Activated B cell treated with CpG ODN at 0.5 μM for 24 hours (primary cell): ENCODE measurements at regions of chr7 and their contacts with region 1.

Region 1: DNA sequence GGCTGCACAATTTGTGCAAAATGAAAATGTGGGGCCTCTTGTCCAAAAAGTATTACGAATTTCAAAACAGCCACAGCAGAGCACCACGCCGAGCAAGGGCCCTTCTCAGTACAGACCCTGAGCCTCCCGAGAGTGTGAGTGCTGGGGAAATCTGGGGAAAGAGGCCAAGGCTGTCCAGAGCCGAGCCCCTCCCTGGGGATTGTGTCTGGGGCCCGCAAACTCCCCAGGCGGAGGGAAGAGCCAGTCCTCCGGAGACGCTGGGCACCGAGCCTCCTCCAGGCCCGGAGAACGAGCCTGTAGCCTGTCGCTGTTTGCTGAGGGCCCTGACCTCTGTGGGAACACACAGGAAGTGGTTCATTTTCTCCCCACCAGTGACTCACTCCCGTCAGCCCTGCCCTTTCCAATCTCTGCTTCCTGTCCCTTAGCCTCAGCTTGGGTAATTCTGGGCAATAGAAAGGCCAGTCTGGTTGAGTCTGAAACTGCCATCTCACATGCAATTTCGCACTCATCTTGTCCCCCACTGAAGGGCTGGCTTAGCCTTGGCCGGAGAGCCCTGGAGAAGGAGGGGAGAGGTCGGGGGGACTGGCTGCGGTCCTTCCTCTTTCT is 19.5 kb upstream of the GNA12 start:
- DNase-seq: peak; percentile 41
- ATAC-seq: peak; percentile 91
- H3K4me3 Mint-ChIP-seq: peak overlapping the region; percentile 66
- H3K27ac Mint-ChIP-seq: peak overlapping the region; percentile 87
- H3K4me1 Mint-ChIP-seq: peaks cover 24% of the 10 kb centered on the region
- H3K27me3 Mint-ChIP-seq: no peaks in the 10 kb centered on the region
- CTCF ChIP-seq: no peak

Region 2: GRCh38 chr7:2720582-2721491 is 142.7 kb before region 1 on chr7:
- CTCF ChIA-PET with region 1: interaction called, 4 read pairs
- POLR2A ChIA-PET with region 1: interaction called, 3 read pairs
- intact Hi-C with region 1: loop called (anchors 2 kb)
- DNase-seq: peak; percentile 57
- ATAC-seq: peak; percentile 82
- H3K4me3 Mint-ChIP-seq: peak overlapping the region; percentile 26
- H3K27ac Mint-ChIP-seq: peak overlapping the region; percentile 84
- H3K4me1 Mint-ChIP-seq: peaks cover 56% of the 10 kb centered on the region
- H3K27me3 Mint-ChIP-seq: no peaks in the 10 kb centered on the region
- CTCF ChIP-seq: no peak

Region 3: DNA sequence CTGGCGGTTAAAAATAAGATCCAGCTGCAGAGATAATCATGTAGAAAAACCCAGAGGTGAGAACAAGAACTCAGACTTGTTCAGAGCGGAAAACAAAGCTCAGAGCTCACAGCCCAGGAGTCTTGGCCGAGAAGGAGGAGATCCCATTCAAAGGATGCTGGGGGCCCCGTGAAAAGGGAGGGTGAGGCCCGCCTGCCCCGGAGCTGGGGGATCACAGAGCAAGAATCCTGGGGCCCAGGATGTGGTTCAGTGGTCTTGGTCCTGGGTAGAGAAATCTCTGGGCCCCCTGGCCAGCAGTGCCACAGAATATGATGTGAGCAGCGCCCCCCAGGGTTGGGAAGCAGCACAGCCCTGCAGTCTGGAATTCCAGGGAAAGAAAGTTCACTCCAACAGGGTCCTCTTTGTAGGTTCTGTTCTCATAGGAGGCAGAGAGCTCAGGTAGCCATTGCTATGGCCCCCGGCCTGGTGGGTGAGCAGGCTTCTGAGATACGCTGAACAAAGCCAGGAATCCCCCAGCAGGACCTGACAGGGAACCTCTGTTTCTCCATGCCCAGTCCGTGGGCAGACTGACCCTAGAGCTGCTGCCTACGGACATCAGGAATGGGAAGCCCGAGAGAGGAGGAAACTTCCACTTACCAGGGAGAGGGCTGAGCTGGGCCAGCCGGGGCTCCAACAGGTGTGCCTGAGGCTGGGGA is 58.2 kb after region 1 on chr7:
- CTCF ChIA-PET with region 1: no interaction called
- POLR2A ChIA-PET with region 1: no interaction called
- intact Hi-C with region 1: no loop called
- DNase-seq: no peak
- ATAC-seq: no peak
- H3K4me3 Mint-ChIP-seq: no peak overlapping the region
- H3K27ac Mint-ChIP-seq: no peak overlapping the region
- H3K4me1 Mint-ChIP-seq: no peaks in the 10 kb centered on the region
- H3K27me3 Mint-ChIP-seq: no peaks in the 10 kb centered on the region
- CTCF ChIP-seq: no peak

Region 4: DNA sequence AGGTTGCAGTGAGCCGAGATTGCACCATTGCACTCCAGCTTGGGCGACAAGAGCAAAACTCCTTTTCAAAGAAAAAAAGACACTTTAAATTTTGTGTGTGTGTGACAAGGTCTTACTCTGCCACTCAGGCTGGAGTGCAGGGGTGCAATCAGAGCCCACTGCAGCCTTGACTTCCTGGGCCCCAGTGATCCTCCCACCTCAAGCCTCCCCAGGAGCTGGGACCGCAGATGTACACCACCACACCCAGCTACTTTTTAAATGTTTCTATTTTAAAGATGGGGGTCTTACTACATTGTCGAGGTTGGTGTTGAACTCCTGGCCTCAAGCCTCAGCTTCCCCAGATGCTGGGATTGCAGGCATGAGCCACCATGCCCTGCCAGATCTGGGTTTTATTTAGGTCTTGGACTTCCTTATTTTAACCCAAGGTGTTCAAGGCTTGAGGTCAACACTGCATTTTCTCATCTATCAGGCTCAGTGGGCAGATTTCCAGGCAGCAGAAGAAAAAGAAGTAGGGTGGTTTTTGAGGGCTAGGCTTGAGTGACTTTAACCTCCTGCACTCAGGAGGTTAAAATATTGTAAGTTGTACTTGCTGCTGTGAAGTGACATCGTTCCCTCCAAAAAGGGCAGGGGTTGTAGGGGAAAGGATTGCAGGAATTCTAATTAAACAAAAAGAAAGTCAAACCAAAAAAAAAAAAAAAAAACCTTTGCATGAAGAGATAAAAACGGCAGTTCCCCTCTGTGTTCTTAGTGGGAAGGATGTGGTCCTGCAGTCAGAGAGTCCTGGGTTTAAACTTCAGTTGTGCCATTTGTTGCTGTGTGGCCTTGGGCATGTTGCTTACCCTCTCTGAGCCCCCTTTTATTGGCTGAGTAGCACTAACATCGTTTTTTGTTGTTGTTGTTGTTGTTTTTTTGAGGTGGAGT is 108.6 kb after region 1 on chr7:
- CTCF ChIA-PET with region 1: no interaction called
- POLR2A ChIA-PET with region 1: no interaction called
- intact Hi-C with region 1: no loop called
- DNase-seq: no peak
- ATAC-seq: peak; percentile 67
- H3K4me3 Mint-ChIP-seq: peak overlapping the region; percentile 64
- H3K27ac Mint-ChIP-seq: peak overlapping the region; percentile 79
- H3K4me1 Mint-ChIP-seq: peaks cover 43% of the 10 kb centered on the region
- H3K27me3 Mint-ChIP-seq: no peaks in the 10 kb centered on the region
- CTCF ChIP-seq: no peak

Region 5: GRCh38 chr7:3021825-3022224 is 158.3 kb after region 1 on chr7:
- CTCF ChIA-PET with region 1: no interaction called
- POLR2A ChIA-PET with region 1: no interaction called
- intact Hi-C with region 1: no loop called
- DNase-seq: no peak
- ATAC-seq: no peak
- H3K4me3 Mint-ChIP-seq: no peak overlapping the region
- H3K27ac Mint-ChIP-seq: peak overlapping the region; percentile 25
- H3K4me1 Mint-ChIP-seq: peaks cover 28% of the 10 kb centered on the region
- H3K27me3 Mint-ChIP-seq: no peaks in the 10 kb centered on the region
- CTCF ChIP-seq: no peak

Region 6: GRCh38 chr7:3065724-3066143 is 202.2 kb after region 1 on chr7:
- CTCF ChIA-PET with region 1: interaction called, 11 read pairs
- POLR2A ChIA-PET with region 1: no interaction called
- intact Hi-C with region 1: no loop called
- DNase-seq: peak; percentile 58
- ATAC-seq: peak; percentile 40
- H3K4me3 Mint-ChIP-seq: peak overlapping the region; percentile 68
- H3K27ac Mint-ChIP-seq: peak overlapping the region; percentile 61
- H3K4me1 Mint-ChIP-seq: peaks cover 67% of the 10 kb centered on the region
- H3K27me3 Mint-ChIP-seq: no peaks in the 10 kb centered on the region
- CTCF ChIP-seq: no peak

Region 7: GRCh38 chr7:3200504-3200903 is 336.9 kb after region 1 on chr7:
- CTCF ChIA-PET with region 1: no interaction called
- POLR2A ChIA-PET with region 1: no interaction called
- intact Hi-C with region 1: loop called (anchors 1 kb)
- DNase-seq: no peak
- ATAC-seq: no peak
- H3K4me3 Mint-ChIP-seq: no peak overlapping the region
- H3K27ac Mint-ChIP-seq: no peak overlapping the region
- H3K4me1 Mint-ChIP-seq: peaks cover 4% of the 10 kb centered on the region
- H3K27me3 Mint-ChIP-seq: peaks cover 2% of the 10 kb centered on the region
- CTCF ChIP-seq: no peak

Region 8: GRCh38 chr7:3399858-3400257 is 536.3 kb after region 1 on chr7:
- CTCF ChIA-PET with region 1: no interaction called
- POLR2A ChIA-PET with region 1: no interaction called
- intact Hi-C with region 1: loop called (anchors 10 kb)
- DNase-seq: no peak
- ATAC-seq: no peak
- H3K4me3 Mint-ChIP-seq: no peak overlapping the region
- H3K27ac Mint-ChIP-seq: no peak overlapping the region
- H3K4me1 Mint-ChIP-seq: no peaks in the 10 kb centered on the region
- H3K27me3 Mint-ChIP-seq: peaks cover 26% of the 10 kb centered on the region
- CTCF ChIP-seq: no peak